Activated CD8-positive, alpha-beta T cell treated with anti-CD3 and anti-CD28 coated beads, Interleukin-2, amount 10 ng/mL, durations not matched to agents 7 days and 5 days (primary cell): ENCODE measurements at regions of chr2 and their contacts with region 1.

Region 1: GRCh38 chr2:69724540-69725159 is 17.3 kb upstream of the ANXA4 start:
- DNase-seq: peak; percentile 91
- ATAC-seq: peak; percentile 95
- H3K4me3 Mint-ChIP-seq: peak overlapping the region; percentile 53
- H3K27ac Mint-ChIP-seq: no peak overlapping the region
- H3K4me1 Mint-ChIP-seq: peaks cover 13% of the 10 kb centered on the region
- H3K27me3 Mint-ChIP-seq: peaks cover 5% of the 10 kb centered on the region

Region 2: DNA sequence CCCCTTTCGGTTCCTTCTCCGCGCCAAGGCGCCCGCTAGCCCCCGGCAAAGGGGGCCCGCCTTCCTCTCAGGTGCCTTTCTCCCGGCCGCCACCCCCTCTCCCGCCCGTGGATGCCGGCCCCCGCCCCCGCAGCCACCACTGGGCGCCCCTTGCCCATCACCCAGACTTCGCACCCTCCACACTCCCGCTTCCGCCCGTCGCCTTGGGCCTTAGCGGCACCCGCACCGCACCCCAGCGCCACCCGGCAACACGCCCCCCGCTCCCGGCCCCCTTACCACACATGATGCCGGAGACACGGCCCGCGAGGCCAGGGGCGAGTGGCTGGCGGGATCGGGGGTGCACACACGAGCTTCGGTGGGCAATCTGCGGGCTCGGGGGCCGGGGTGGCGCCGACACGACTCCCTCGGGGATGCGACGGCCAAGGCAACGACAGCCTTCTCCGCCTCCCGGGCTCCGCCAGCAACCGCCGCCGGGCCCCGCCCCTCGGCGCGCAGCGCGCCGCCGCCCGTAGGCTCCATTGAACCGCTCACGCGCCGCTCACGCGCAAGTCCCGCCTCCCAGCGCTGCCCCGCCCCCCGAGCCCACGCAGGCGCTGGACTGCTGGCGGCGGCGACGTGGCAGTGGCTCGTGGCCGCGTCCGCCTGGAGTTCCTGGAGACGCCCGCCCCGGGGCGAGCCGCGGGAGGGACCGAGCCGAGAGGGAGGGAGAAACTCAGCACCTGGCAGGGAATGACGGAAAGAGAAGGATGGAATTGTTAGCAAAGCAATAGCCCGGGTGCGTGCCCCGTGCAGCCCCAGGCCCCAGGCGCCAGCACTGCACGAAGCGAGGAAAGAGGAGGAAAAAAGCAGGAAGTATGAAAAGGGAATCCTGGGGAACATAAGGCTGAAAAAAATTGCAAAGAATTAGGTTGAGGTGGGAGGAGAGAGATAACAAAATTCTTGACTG is 337.6 kb before region 1 on chr2 and contains the start of gene GFPT1:
- CTCF ChIA-PET with region 1: interaction called, 11 read pairs
- POLR2A ChIA-PET with region 1: no interaction called
- DNase-seq: peak; percentile 94
- ATAC-seq: peak; percentile 96
- H3K4me3 Mint-ChIP-seq: peak within 1 kb of the TSS; percentile 87
- H3K27ac Mint-ChIP-seq: peak within 1 kb of the TSS; percentile 89
- H3K4me1 Mint-ChIP-seq: peaks cover 38% of the 10 kb centered on the region
- H3K27me3 Mint-ChIP-seq: peaks cover 2% of the 10 kb centered on the region
- total RNA-seq, gene GFPT1: 23.5 to 26.1 TPM

Region 3: GRCh38 chr2:69514406-69514805 is 210.2 kb before region 1 on chr2:
- CTCF ChIA-PET with region 1: no interaction called
- POLR2A ChIA-PET with region 1: no interaction called
- DNase-seq: no peak
- ATAC-seq: no peak
- H3K4me3 Mint-ChIP-seq: no peak overlapping the region
- H3K27ac Mint-ChIP-seq: no peak overlapping the region
- H3K4me1 Mint-ChIP-seq: peaks cover 7% of the 10 kb centered on the region
- H3K27me3 Mint-ChIP-seq: no peaks in the 10 kb centered on the region

Region 4: GRCh38 chr2:69572641-69573040 is 152.0 kb before region 1 on chr2:
- CTCF ChIA-PET with region 1: interaction called, 14 read pairs
- POLR2A ChIA-PET with region 1: interaction called, 4 read pairs
- DNase-seq: no peak
- ATAC-seq: no peak
- H3K4me3 Mint-ChIP-seq: no peak overlapping the region
- H3K27ac Mint-ChIP-seq: peak overlapping the region; percentile 16
- H3K4me1 Mint-ChIP-seq: peaks cover 55% of the 10 kb centered on the region
- H3K27me3 Mint-ChIP-seq: no peaks in the 10 kb centered on the region

Region 5: DNA sequence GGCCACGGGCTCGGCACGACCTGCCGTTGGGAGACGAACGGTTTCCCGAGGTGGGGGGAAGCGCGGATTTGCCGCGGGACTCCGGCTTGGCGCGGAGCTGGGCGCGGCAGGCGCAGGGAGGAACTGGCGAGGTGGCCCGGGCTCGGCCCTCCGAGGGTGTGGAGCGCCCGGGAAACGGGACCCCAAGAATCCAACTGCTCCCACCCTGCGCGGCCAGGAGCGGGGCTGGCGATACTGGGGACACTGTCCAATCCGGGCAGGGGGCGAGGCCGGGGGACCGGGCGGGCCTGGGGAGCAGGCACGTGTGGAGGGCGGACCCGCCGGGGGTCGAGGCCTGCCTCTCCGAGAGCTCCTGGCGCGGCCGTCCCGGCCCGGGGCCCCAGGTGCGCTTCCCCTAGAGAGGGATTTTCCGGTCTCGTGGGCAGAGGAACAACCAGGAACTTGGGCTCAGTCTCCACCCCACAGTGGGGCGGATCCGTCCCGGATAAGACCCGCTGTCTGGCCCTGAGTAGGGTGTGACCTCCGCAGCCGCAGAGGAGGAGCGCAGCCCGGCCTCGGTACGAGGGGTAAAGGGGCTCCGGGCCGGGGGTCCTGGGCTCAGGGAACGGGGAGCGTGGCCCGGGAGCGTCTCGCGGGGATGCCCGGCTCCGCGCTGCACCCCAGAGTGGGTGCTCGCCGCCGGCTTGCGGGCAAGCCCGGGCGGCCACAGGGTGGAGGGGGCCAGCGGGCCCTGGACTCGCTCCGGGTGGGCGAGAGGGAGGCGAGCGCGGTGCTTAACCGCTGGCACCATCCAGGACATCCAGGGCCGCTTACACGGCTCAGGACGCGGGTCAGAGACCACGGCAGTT is 17.2 kb after region 1 on chr2 and contains the start of gene ANXA4:
- CTCF ChIA-PET with region 1: interaction called, 36 read pairs
- POLR2A ChIA-PET with region 1: no interaction called
- DNase-seq: peak; percentile 68
- ATAC-seq: peak; percentile 95
- H3K4me3 Mint-ChIP-seq: peak within 1 kb of the TSS; percentile 80
- H3K27ac Mint-ChIP-seq: peak within 1 kb of the TSS; percentile 85
- H3K4me1 Mint-ChIP-seq: peaks cover 19% of the 10 kb centered on the region
- H3K27me3 Mint-ChIP-seq: peaks cover 13% of the 10 kb centered on the region
- total RNA-seq, gene ANXA4: 53.5 to 59.5 TPM

Region 6: DNA sequence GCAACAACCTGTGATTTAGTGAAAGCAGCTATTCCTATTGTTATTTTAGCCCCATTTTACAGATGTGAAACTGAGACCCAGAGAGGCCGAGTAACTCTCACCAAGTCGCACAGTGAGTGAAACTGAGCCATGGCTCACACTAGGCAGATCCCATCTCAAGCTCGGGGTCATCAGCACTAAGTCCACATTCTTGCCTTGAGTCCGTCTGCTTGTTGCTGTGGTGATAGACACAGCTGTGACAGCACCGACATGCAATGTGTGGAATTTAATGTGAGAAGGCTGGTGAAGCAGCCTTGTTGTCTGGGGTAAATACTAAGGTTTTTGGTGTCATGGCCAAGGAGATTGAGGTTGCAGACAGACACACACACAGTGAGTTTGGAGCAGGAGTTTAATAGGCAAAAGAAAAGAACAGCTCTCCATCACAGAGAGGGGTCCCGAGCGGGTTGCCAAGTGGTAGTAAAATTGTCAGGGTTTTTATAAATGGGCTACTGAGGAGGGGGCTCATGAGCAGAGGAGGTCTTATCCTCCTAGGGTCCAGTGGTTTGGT is 64.6 kb after region 1 on chr2:
- CTCF ChIA-PET with region 1: interaction called, 19 read pairs
- POLR2A ChIA-PET with region 1: no interaction called
- DNase-seq: no peak
- ATAC-seq: no peak
- H3K4me3 Mint-ChIP-seq: no peak overlapping the region
- H3K27ac Mint-ChIP-seq: no peak overlapping the region
- H3K4me1 Mint-ChIP-seq: peaks cover 21% of the 10 kb centered on the region
- H3K27me3 Mint-ChIP-seq: no peaks in the 10 kb centered on the region

Region 7: DNA sequence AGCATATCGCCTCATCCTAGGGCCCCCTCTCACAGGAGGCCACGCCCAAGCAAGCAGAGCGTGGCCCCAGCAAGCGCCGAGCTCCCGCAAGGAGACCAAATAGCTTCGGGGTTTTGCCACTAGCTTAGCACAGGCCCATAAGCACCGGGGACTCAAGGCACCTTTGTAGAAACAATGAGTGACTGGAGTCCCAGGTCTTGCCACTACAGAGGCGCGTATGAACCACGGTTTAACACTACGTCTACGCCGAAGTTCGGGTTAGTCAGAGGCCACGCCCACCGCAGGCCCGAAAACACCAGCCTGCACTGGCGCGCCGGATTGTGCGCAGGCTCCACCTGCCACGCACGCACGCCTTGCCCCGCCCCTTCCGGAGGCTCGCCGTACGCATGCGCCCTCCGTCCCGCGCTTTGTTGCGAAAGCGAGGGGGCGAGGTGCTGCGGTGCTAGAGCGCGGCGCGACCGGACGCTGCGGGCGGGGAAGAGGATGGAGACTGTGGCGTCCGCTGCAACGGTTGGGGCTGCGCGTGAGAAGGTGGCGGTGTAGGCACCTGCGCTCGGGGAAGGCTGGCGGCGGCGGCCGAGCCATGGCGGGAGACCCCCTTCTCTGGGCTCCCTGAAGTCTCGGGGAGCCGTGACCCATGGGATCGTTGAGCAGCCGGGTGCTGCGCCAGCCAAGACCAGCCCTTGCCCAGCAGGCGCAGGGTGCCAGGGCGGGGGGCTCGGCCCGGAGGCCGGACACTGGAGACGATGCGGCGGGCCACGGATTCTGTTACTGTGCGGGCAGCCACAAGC is 104.8 kb after region 1 on chr2 and contains the start of gene GMCL1:
- CTCF ChIA-PET with region 1: interaction called, 38 read pairs
- POLR2A ChIA-PET with region 1: interaction called, 3 read pairs
- DNase-seq: peak; percentile 99
- ATAC-seq: peak; percentile 93
- H3K4me3 Mint-ChIP-seq: peak within 1 kb of the TSS; percentile 82
- H3K27ac Mint-ChIP-seq: peak within 1 kb of the TSS; percentile 96
- H3K4me1 Mint-ChIP-seq: peaks cover 53% of the 10 kb centered on the region
- H3K27me3 Mint-ChIP-seq: no peaks in the 10 kb centered on the region
- total RNA-seq, gene GMCL1: 25.4 to 31.6 TPM

Region 8: GRCh38 chr2:69914170-69914960 is 189.7 kb after region 1 on chr2:
- CTCF ChIA-PET with region 1: interaction called, 15 read pairs
- POLR2A ChIA-PET with region 1: no interaction called
- DNase-seq: peak; percentile 100
- ATAC-seq: peak; percentile 93
- H3K4me3 Mint-ChIP-seq: peak overlapping the region; percentile 84
- H3K27ac Mint-ChIP-seq: peak overlapping the region; percentile 87
- H3K4me1 Mint-ChIP-seq: peaks cover 42% of the 10 kb centered on the region
- H3K27me3 Mint-ChIP-seq: no peaks in the 10 kb centered on the region

Region 9: GRCh38 chr2:69936906-69937305 is 212.3 kb after region 1 on chr2:
- CTCF ChIA-PET with region 1: no interaction called
- POLR2A ChIA-PET with region 1: no interaction called
- DNase-seq: no peak
- ATAC-seq: no peak
- H3K4me3 Mint-ChIP-seq: no peak overlapping the region
- H3K27ac Mint-ChIP-seq: no peak overlapping the region
- H3K4me1 Mint-ChIP-seq: peaks cover 17% of the 10 kb centered on the region
- H3K27me3 Mint-ChIP-seq: no peaks in the 10 kb centered on the region